Activated naive CD4-positive, alpha-beta T cell treated with anti-CD3 and anti-CD28 coated beads for 36 hours (primary cell): ENCODE measurements at regions of chr15 and their contacts with region 1.

Region 1: DNA sequence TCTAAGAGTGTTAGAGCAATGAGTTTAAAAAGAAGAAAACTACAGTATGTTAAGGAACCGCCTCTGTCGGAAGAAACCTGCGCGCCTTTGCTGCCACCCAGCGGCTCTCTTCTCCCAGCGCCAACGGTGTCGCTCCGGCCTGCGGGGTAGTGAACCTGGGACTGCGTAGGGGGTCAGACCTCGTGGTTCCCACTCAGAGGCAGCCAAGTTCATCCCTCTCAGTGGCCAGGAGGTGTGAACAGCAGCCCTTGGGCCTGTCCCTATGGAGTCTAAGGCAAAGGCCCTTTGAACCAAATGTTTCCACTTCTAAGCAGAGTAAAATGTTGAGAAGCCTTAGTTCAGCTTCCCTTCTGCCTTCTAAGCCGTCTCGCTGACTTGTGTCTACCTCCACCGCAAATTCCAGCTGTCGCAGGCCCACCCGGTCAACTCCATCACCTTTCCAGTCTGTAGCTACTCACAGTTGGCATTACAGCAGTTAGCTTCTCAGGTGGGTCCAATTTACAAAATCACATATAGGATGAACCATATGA is 980 bp upstream of the RAB27A start:
- DNase-seq: peak; percentile 90
- H3K4me3 Mint-ChIP-seq: peak overlapping the region; percentile 80
- H3K27ac Mint-ChIP-seq: peak overlapping the region; percentile 91
- H3K4me1 Mint-ChIP-seq: peaks cover 29% of the 10 kb centered on the region
- H3K27me3 Mint-ChIP-seq: no peaks in the 10 kb centered on the region

Region 2: DNA sequence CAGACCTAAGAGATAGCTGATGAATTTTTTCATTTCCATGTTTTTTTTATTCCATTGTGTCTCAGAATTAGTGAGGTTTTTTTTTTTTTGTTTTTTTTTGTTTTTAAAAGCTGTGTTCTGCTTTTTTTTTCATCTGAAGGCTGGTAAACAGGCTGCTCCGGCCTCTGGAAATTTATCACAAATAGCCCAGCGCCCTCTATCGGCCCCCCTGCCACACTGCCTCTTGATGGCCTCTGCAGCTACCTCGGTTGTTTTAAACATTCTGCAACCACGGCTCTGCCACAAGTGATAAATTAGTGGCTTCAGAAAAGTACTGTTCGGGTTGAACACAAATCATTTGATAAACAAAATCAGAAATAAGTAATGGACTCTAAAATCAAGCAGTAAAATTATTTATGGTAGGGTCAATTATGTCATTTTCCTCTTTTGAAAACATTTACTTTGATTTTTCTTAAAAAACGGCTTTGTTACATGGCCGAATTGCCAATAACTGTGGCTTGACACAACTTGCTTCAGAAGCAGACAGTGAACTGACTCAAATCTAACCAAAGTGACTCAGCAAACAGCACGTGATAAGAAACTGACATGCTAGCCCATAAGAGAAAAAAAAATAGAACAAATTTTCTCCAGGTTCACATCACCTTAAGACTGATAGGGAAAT is 181.6 kb before region 1 on chr15:
- CTCF ChIA-PET with region 1: interaction called, 4 read pairs
- intact Hi-C with region 1: loop called (anchors 2 kb)
- DNase-seq: peak; percentile 78
- H3K4me3 Mint-ChIP-seq: no peak overlapping the region
- H3K27ac Mint-ChIP-seq: no peak overlapping the region
- H3K4me1 Mint-ChIP-seq: no peaks in the 10 kb centered on the region
- H3K27me3 Mint-ChIP-seq: no peaks in the 10 kb centered on the region

Region 3: GRCh38 chr15:55221090-55222011 is 69.2 kb before region 1 on chr15:
- CTCF ChIA-PET with region 1: interaction called, 59 read pairs
- intact Hi-C with region 1: loop called (anchors 1 kb)
- DNase-seq: peak; percentile 49
- H3K4me3 Mint-ChIP-seq: peak overlapping the region; percentile 10
- H3K27ac Mint-ChIP-seq: peak overlapping the region; percentile 87
- H3K4me1 Mint-ChIP-seq: peaks cover 67% of the 10 kb centered on the region
- H3K27me3 Mint-ChIP-seq: no peaks in the 10 kb centered on the region

Region 4: GRCh38 chr15:55279746-55280351 is 10.7 kb before region 1 on chr15:
- CTCF ChIA-PET with region 1: no interaction called
- intact Hi-C with region 1: loop called (anchors 1 kb)
- DNase-seq: peak; percentile 72
- H3K4me3 Mint-ChIP-seq: peak overlapping the region; percentile 31
- H3K27ac Mint-ChIP-seq: peak overlapping the region; percentile 90
- H3K4me1 Mint-ChIP-seq: peaks cover 95% of the 10 kb centered on the region
- H3K27me3 Mint-ChIP-seq: no peaks in the 10 kb centered on the region

Region 5: DNA sequence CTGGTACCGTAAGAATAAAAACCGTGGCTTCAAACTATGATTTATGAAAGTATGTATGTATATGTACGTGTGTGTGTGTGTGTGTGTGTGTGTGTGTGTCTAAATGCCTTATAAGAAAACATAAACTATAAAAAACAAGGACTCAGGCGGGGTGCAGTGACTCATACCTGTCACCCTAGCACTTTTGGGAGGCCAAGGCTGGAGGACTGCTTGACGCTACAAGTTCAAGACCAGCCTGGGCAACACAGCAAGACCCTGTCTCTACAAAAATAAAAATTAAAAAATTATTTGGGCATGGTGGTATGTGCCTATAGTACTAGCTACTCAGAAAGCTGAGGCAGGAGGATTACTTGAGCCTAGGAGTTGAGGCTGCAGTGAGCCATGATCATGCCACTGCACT is 88.5 kb after region 1 on chr15:
- CTCF ChIA-PET with region 1: no interaction called
- intact Hi-C with region 1: no loop called
- DNase-seq: no peak
- H3K4me3 Mint-ChIP-seq: no peak overlapping the region
- H3K27ac Mint-ChIP-seq: no peak overlapping the region
- H3K4me1 Mint-ChIP-seq: no peaks in the 10 kb centered on the region
- H3K27me3 Mint-ChIP-seq: no peaks in the 10 kb centered on the region

Region 6: GRCh38 chr15:55434989-55435825 is 144.6 kb after region 1 on chr15:
- CTCF ChIA-PET with region 1: interaction called, 8 read pairs
- intact Hi-C with region 1: loop called (anchors 2 kb)
- DNase-seq: peak; percentile 14
- H3K4me3 Mint-ChIP-seq: no peak overlapping the region
- H3K27ac Mint-ChIP-seq: no peak overlapping the region
- H3K4me1 Mint-ChIP-seq: no peaks in the 10 kb centered on the region
- H3K27me3 Mint-ChIP-seq: no peaks in the 10 kb centered on the region